Sigmoid colon (tissue), 7 donors: ENCODE measurements at regions of chr4 and their contacts with region 1.

Region 1: DNA sequence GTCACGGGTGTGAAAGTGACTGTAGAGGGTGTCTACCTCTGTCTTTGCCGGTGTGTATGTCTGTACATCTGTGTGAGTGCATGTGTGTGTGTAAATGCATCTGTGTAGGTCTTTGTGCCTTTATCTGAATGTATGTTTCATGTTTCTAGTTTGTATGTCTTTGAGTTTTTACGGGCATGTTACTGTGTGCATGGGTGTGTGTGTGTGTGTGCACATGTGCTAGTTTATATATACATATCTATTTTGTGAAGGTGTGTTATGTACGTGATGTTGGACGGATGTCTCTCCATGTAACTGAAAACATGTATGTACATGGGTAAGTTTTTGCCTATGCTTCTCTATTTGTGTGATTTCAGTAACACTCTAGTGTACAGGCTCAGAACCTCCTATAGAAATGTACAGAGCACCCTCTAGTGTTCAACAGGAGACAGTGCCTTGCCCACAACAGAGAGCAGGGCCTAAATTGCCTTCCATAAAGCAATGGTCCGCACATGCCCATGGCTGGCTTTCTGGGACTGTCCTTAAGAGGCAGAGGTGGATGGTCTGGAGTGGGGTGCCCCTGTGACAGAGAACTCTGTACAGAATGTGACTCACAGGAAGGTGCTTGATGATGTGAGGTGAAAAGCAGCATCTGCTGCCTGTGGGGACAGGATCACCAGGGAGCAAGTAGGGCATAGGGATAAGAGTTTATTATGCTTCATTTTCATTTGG is 343.5 kb downstream of the RAPGEF2 start:
- DNase-seq: no peak
- H3K4me3 ChIP-seq: no peak overlapping the region
- H3K27ac ChIP-seq: no peak overlapping the region
- H3K4me1 ChIP-seq: no peaks in the 10 kb centered on the region
- H3K27me3 ChIP-seq: no peaks in the 10 kb centered on the region
- CTCF ChIP-seq: peak in 3 of 4 experiments; percentile 62 to 83 (median 74)
- EP300 ChIP-seq: no peak
- POLR2A ChIP-seq: no peak

Region 2: GRCh38 chr4:158729716-158730559 is 716.5 kb before region 1 on chr4:
- intact Hi-C with region 1: loop called (anchors 5 kb)
- DNase-seq: peak; percentile 77
- H3K4me3 ChIP-seq: no peak overlapping the region
- H3K27ac ChIP-seq: no peak overlapping the region
- H3K4me1 ChIP-seq: peaks cover 0 to 4% (median 0%) of the 10 kb centered on the region in 4 donors
- H3K27me3 ChIP-seq: no peaks in the 10 kb centered on the region
- CTCF ChIP-seq: peak; percentile 87 to 95 (median 92)
- EP300 ChIP-seq: no peak
- POLR2A ChIP-seq: no peak

Region 3: DNA sequence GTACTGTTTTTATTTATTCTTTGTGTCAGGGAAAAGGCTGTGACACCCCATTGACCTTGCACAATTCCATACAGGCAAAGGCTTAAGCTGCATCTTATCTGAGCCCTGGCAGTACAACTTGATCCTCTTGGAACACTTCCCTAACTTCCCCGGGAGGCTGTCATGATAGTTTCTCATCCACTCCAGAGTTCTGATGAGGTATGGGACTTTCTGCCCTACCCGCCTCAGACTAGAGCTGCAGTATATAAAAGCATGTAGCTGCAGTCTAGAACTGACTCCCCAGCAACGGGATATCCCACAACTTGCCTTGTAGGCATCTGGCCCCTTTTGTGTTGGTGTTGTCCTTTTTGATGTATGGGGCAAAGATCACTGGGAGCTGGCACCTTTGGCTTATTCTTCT is 604.9 kb before region 1 on chr4:
- intact Hi-C with region 1: loop called (anchors 5 kb)
- DNase-seq: no peak
- H3K4me3 ChIP-seq: no peak overlapping the region
- H3K27ac ChIP-seq: no peak overlapping the region
- H3K4me1 ChIP-seq: no peaks in the 10 kb centered on the region
- H3K27me3 ChIP-seq: no peaks in the 10 kb centered on the region
- CTCF ChIP-seq: no peak
- EP300 ChIP-seq: no peak
- POLR2A ChIP-seq: no peak

Region 4: GRCh38 chr4:159366966-159367780 is 79.2 kb before region 1 on chr4:
- intact Hi-C with region 1: no loop called
- DNase-seq: no peak
- H3K4me3 ChIP-seq: no peak overlapping the region
- H3K27ac ChIP-seq: no peak overlapping the region
- H3K4me1 ChIP-seq: no peaks in the 10 kb centered on the region
- H3K27me3 ChIP-seq: no peaks in the 10 kb centered on the region
- CTCF ChIP-seq: no peak
- EP300 ChIP-seq: no peak
- POLR2A ChIP-seq: no peak

Region 5: DNA sequence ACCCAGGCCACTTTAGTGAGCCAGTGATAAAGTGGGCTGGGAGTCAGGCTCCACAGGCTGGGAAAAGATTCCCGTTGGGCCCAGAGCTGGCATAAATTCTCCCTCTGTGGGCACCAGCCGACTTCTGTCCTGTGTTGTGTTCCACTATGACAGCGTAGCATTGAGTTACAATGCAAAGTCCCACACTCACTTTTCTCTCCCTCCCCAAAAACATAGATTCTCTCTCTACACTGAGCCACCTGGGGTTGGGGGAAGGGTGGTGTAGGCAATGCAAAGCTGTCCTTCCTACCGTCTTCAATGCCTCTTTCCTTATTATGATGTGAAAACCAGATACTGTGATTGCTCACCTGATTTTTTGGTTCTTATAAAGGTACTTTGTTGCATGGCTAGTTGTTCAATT is 222.7 kb after region 1 on chr4:
- intact Hi-C with region 1: no loop called
- DNase-seq: no peak
- H3K4me3 ChIP-seq: no peak overlapping the region
- H3K27ac ChIP-seq: no peak overlapping the region
- H3K4me1 ChIP-seq: no peaks in the 10 kb centered on the region
- H3K27me3 ChIP-seq: no peaks in the 10 kb centered on the region
- CTCF ChIP-seq: no peak
- EP300 ChIP-seq: no peak
- POLR2A ChIP-seq: no peak